ENCODE measurements at regions of chr10 and their contacts with region 1.

Region 1: GRCh38 chr10:63720072-63720537 is 198.9 kb downstream of the REEP3 start:
- DNase-seq: no peak
- H3K4me3 ChIP-seq: no peak overlapping the region
- H3K27ac ChIP-seq: peak overlapping the region in 2 of 4 donors; percentile 5 to 68
- H3K4me1 ChIP-seq: peaks cover 16 to 41% (median 27%) of the 10 kb centered on the region in 4 donors
- H3K27me3 ChIP-seq: no peaks in the 10 kb centered on the region
- CTCF ChIP-seq: peak; percentile 96 to 99 (median 99)
- EP300 ChIP-seq: no peak
- POLR2A ChIP-seq: no peak

Region 2: DNA sequence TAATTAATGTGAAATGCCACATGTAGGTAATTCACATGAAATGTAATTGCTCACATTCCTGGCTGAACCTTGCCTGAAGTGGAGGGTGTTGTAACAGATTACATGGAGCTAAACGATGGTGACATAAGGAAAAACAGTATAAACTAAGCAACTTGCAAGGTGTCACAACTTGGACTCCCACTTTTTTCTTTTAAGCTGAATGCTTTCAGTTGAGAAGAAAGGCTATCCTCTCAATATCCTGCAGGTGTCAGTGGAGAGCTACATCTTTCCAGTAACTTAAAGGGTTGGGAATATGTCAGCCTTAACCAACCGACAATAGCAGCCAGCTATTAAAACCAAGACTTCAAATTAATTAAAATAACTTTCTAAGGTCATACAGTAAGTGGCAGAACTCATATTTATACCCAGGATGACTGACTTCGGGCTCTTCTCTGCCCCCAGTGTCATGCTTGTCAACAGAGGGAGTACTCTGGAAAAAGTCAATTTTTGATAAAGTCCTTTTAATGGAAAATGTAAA is 553.3 kb before region 1 on chr10:
- intact Hi-C with region 1: loop called (anchors 2 kb)
- DNase-seq: no peak
- H3K4me3 ChIP-seq: no peak overlapping the region
- H3K27ac ChIP-seq: peak overlapping the region in 2 of 4 donors; percentile 12 to 46
- H3K4me1 ChIP-seq: peaks cover 15 to 53% (median 50%) of the 10 kb centered on the region in 4 donors
- H3K27me3 ChIP-seq: no peaks in the 10 kb centered on the region
- CTCF ChIP-seq: peak; percentile 83 to 88 (median 86)
- EP300 ChIP-seq: no peak
- POLR2A ChIP-seq: no peak

Region 3: DNA sequence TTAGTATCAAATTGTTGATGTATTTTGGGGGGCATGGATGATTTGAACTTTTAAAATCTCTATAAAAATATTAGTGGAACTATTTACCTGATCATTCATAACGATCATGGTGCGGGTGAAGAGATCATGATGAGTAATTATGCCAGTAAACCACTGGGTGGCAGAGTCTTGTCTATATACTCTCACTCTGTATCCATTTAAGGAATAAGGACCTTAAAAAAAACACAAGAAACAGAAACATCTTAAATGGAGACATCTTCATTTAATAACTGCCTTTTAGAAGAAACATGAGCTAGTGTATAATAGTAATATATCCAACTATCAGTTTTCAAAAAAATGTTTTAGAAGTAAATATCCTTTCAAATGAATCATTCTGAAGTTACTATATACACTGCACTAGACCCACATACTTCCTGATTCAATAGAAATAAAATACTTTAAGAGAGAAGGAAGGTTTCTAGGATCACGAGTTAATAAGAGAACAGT is 502.9 kb before region 1 on chr10:
- intact Hi-C with region 1: loop called (anchors 5 kb)
- DNase-seq: no peak
- H3K4me3 ChIP-seq: no peak overlapping the region
- H3K27ac ChIP-seq: no peak overlapping the region
- H3K4me1 ChIP-seq: peaks cover 16 to 45% (median 29%) of the 10 kb centered on the region in 4 donors
- H3K27me3 ChIP-seq: no peaks in the 10 kb centered on the region
- CTCF ChIP-seq: peak; percentile 67 to 76 (median 73)
- EP300 ChIP-seq: no peak
- POLR2A ChIP-seq: no peak

Measured in esophagus muscularis mucosa (tissue), 4 donors.